Caco-2 (cell line): ENCODE measurements at regions of chr12 and their contacts with region 1.

Region 1: DNA sequence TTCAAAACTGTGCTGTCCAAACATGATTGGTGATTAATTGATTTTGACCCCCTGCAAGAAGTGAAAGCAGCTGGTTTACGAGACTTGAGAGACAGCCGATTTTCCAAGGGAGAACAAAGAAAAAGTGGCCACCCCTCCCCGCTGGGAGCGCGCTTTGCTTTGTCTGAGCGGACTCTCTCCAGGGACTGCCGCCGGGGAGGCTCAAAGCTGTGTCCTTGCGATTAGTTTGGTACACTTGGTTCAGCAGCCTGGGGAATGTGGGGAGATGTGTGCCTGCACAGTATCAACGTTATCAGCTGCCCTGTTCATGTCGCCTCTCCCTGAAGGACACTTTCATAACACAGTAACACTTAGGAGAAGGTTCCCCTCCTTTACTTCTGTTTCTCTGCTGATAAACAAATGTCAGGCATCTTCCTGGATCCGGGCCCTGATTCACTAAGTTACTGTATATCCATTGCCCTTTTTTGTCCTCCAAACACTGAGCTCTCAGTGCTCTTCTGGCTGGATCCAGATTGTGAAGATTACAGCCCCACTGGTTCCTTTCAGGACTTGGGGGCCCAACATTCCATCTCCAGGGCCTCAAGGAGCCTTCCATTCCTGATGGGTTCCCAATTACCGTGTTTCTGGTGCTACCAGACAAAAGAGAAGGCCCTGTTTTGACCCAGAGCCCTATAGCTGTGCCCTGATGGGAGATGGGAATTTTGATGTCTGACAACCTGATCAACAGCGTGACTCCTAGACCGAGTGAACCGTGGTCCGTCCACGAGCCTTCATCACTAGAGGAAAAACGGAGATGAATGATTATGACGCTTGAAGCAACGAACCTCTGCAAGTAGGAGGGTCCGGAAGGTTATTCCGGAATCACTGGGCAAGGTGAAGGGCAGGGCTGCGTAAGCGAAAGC is 31.7 kb upstream of the TUBA1C start:
- DNase-seq: no peak
- H3K4me3 ChIP-seq: no peak overlapping the region
- H3K4me3 Mint-ChIP-seq: peak overlapping the region; percentile 82
- H3K27ac Mint-ChIP-seq: peak overlapping the region; percentile 47
- H3K4me1 ChIP-seq: no peaks in the 10 kb centered on the region; the same call in 1 of the 2 replicates
- H3K4me1 Mint-ChIP-seq: peaks cover 13% of the 10 kb centered on the region
- H3K27me3 ChIP-seq: no peaks in the 10 kb centered on the region
- H3K27me3 Mint-ChIP-seq: peaks cover 2% of the 10 kb centered on the region
- CTCF ChIP-seq: no peak

Region 2: GRCh38 chr12:49088190-49088931 is 144.8 kb before region 1 on chr12:
- CTCF ChIA-PET with region 1: interaction called, 14 read pairs
- POLR2A ChIA-PET with region 1: no interaction called
- intact Hi-C with region 1: loop called (anchors 1 kb)
- DNase-seq: peak; percentile 84
- H3K4me3 ChIP-seq: no peak overlapping the region
- H3K4me3 Mint-ChIP-seq: peak overlapping the region; percentile 50
- H3K27ac Mint-ChIP-seq: no peak overlapping the region
- H3K4me1 ChIP-seq: peaks cover 11% of the 10 kb centered on the region
- H3K4me1 Mint-ChIP-seq: no peaks in the 10 kb centered on the region
- H3K27me3 ChIP-seq: peaks cover 8% of the 10 kb centered on the region; the same call in 1 of the 2 replicates
- H3K27me3 Mint-ChIP-seq: peaks cover 19% of the 10 kb centered on the region
- CTCF ChIP-seq: peak; percentile 91 to 97

Region 3: GRCh38 chr12:49138587-49138986 is 94.6 kb before region 1 on chr12:
- CTCF ChIA-PET with region 1: no interaction called
- POLR2A ChIA-PET with region 1: no interaction called
- intact Hi-C with region 1: no loop called
- DNase-seq: no peak
- H3K4me3 ChIP-seq: no peak overlapping the region
- H3K4me3 Mint-ChIP-seq: no peak overlapping the region
- H3K27ac Mint-ChIP-seq: no peak overlapping the region
- H3K4me1 ChIP-seq: no peaks in the 10 kb centered on the region
- H3K4me1 Mint-ChIP-seq: no peaks in the 10 kb centered on the region
- H3K27me3 ChIP-seq: no peaks in the 10 kb centered on the region
- H3K27me3 Mint-ChIP-seq: no peaks in the 10 kb centered on the region
- CTCF ChIP-seq: no peak